ENCODE measurements at regions of chr2 and their contacts with region 1.

Region 1: GRCh38 chr2:84302513-84303412 is 156.3 kb downstream of the SUCLG1 start:
- DNase-seq: no peak
- H3K4me3 ChIP-seq: no peak overlapping the region
- H3K27ac ChIP-seq: no peak overlapping the region
- H3K4me1 ChIP-seq: no peaks in the 10 kb centered on the region
- H3K27me3 ChIP-seq: no peaks in the 10 kb centered on the region
- CTCF ChIP-seq: peak; percentile 12 to 78 (median 65)
- POLR2A ChIP-seq: no peak

Region 2: DNA sequence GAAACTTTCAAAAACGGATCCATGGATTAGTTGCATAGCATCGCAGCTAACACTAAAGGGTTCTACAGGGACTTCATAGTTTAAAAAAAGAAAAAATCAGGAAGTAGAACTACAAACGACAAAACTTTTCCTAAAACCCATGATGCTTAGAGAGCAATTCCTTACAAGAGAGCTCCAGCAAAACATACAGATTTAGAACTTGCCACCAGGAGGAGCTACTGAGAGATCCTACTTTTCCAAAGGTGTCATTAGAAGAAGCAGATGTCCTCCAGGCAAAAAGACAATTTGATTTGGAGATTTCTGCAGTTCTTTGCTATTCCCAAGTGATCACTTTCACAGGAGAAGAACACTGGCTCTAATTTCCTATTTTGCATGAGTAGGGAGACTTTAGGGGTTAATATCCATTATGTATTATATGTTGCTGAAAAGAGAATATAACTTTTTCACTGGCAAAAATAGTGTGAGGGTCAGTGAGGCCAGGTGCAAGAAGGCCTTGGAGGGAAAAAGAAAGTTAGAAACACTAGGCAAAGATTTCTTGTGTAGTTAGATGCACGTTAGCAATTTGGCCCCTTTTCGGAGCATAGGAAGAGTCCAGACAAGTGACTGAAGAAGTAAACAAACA is 279.8 kb before region 1 on chr2:
- intact Hi-C with region 1: loop called (anchors 10 kb)
- DNase-seq: no peak
- H3K4me3 ChIP-seq: no peak overlapping the region
- H3K27ac ChIP-seq: no peak overlapping the region
- H3K4me1 ChIP-seq: no peaks in the 10 kb centered on the region
- H3K27me3 ChIP-seq: no peaks in the 10 kb centered on the region
- CTCF ChIP-seq: peak in 8 of 11 experiments; percentile 10 to 64 (median 48)
- POLR2A ChIP-seq: no peak